ENCODE measurements at regions of chr14 and their contacts with region 1.

Region 1: DNA sequence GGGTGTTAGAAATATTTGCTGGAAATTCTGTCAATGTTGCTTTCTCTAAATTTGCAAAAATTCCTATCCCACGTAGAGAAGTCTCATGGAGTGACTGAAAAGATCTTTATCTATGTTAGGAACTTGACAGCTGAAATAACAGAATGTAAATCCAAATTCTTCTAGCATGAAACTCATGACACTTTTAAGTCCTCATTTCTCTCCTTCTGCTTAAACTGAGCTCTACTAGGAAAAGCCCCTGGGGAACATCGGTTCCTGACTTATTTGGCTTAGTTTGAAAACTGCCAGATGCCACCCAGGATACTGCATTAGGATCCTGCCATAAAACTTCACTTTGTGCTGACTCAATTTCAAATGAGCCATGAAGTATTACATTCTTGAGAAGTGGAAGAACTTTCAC is 426.0 kb downstream of the GALC start:
- DNase-seq: peak; percentile 0
- ATAC-seq: no peak
- H3K4me3 ChIP-seq: no peak overlapping the region
- H3K27ac ChIP-seq: no peak overlapping the region
- H3K4me1 ChIP-seq: no peaks in the 10 kb centered on the region
- H3K27me3 ChIP-seq: no peaks in the 10 kb centered on the region
- CTCF ChIP-seq: no peak
- POLR2A ChIP-seq: no peak
- RAD21 ChIP-seq: no peak

Region 2: GRCh38 chr14:87579036-87579435 is 12.0 kb after region 1 on chr14:
- CTCF ChIA-PET with region 1: no interaction called
- POLR2A ChIA-PET with region 1: interaction called, 10 read pairs
- dilution Hi-C with region 1: no loop called
- in situ Hi-C with region 1: no loop called
- intact Hi-C with region 1: no loop called
- DNase-seq: no peak
- ATAC-seq: no peak
- H3K4me3 ChIP-seq: no peak overlapping the region
- H3K27ac ChIP-seq: no peak overlapping the region
- H3K4me1 ChIP-seq: no peaks in the 10 kb centered on the region
- H3K27me3 ChIP-seq: no peaks in the 10 kb centered on the region
- CTCF ChIP-seq: no peak
- POLR2A ChIP-seq: no peak
- RAD21 ChIP-seq: no peak

Measured in IMR-90 (cell line).